ENCODE measurements at regions of chr4 and their contacts with region 1.

Region 1: DNA sequence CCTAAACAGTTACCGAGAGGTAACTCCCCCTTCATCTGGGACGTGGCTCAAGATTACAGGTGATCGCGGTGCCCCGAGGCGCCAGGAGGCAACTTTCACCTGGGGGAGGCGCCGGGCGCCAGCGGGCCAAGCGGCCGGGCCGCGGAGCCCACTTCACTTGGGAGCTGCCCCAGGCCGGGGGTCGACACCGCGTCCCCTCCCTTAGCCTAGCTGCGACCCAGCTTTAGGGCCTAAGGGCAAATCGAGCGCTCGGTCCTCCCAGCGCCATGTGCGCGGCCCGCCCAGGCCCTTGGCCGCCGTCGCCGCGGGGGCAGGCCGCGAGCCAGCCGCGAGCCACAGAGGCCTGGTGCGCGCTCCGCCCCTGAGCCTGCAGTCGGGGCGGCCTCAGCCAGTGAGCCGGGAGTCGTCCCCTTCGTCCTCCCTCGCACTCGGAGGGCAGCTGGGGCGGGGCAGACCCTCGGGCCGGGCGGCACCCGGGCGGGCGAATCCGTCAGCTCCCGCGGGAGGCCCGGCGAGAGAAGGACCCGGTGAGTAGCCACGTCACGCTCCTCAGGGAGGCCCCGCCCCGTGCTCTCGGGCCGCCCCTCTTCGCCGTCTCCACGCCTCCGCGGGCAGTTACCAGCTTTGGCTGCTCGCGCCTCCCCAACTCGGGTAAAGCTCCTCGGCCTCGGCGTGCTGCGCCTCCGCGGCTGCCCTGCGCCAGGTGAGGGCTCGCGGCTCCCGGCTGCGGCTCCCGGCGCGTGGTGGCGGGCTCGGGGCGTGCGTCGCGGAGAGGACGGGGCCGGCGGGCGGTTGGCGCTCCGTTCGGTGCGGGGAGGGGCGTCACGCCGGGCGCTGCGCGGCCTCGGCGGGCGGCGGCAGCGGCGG is at the start of gene LARP1B:
- DNase-seq: peak; percentile 90
- H3K4me3 ChIP-seq: peak within 1 kb of the TSS; percentile 84
- H3K27ac ChIP-seq: peak within 1 kb of the TSS; percentile 82
- H3K27me3 ChIP-seq: no peaks in the 10 kb centered on the region
- CTCF ChIP-seq: no peak
- polyA plus RNA-seq, gene LARP1B: 16.2 and 24.3 TPM in 2 replicates

Region 2: GRCh38 chr4:127965062-127965802 is 95.7 kb before region 1 on chr4 and contains the starts of genes ABHD18 and MFSD8:
- CTCF ChIA-PET with region 1: no interaction called
- POLR2A ChIA-PET with region 1: interaction called, 17 read pairs
- DNase-seq: peak; percentile 98
- H3K4me3 ChIP-seq: peak within 1 kb of the TSS; percentile 99
- H3K27ac ChIP-seq: peak within 1 kb of the TSS; percentile 92
- H3K27me3 ChIP-seq: no peaks in the 10 kb centered on the region
- CTCF ChIP-seq: peak; percentile 51
- polyA plus RNA-seq, gene ABHD18: 3.2 and 4.5 TPM in 2 replicates
- polyA plus RNA-seq, gene MFSD8: 11.5 and 18.0 TPM in 2 replicates

Region 3: GRCh38 chr4:128031756-128032384 is 29.1 kb before region 1 on chr4:
- CTCF ChIA-PET with region 1: no interaction called
- POLR2A ChIA-PET with region 1: no interaction called
- DNase-seq: peak; percentile 2
- H3K4me3 ChIP-seq: no peak overlapping the region
- H3K27ac ChIP-seq: no peak overlapping the region
- H3K27me3 ChIP-seq: no peaks in the 10 kb centered on the region
- CTCF ChIP-seq: no peak